CD8-positive, alpha-beta T cell (primary cell): ENCODE measurements at regions of chr14 and their contacts with region 1.

Region 1: DNA sequence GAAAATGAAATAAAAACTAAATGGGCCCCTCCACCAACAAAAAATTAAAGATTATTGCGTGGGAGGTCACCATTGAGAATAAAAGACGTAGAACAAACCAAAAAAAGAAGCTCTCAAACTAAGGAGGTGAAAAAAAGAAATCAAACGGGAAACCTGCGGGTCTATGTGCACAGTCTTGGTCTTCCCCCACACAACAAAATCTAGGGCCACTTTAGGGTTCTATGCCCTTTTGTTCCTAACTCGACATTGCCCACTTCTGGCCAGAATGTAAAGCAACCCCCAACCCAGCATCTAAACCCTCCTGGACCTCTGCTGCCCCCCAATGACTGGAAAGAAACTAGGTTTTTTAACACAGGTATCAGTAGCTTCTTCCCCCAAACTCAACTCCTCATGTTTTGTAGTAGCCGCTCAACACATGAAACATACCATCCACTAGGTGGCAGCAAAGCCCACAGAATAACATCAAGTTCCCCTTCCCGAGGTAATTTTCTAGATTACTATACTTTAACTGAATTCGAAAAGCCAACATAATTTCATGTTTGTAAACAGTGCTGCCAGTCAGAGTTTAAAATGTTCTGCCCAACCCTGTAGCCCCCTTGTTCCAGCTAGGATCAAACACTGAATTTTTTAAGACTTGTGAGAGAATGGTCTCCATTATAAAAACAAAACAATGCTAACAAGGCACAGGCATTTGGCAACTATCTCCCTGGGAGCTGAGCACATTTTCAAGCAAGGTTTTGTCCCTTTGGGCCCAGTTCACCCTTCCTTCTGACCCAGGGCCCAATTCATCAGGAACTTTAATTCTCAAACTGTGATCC is 18.7 kb downstream of the DAD1 start:
- DNase-seq: peak; percentile 69 to 99 (median 85)
- ATAC-seq: peak; percentile 87
- H3K4me3 ChIP-seq: peak overlapping the region; percentile 34 to 38
- H3K4me3 Mint-ChIP-seq: peak overlapping the region; percentile 73
- H3K27ac ChIP-seq: peak overlapping the region; percentile 58 to 97
- H3K27ac Mint-ChIP-seq: peak overlapping the region; percentile 97
- H3K4me1 ChIP-seq: peaks cover 51% of the 10 kb centered on the region
- H3K4me1 Mint-ChIP-seq: peaks cover 54% of the 10 kb centered on the region
- H3K27me3 ChIP-seq: no peaks in the 10 kb centered on the region
- H3K27me3 Mint-ChIP-seq: no peaks in the 10 kb centered on the region
- CTCF ChIP-seq: peak; percentile 99

Region 2: GRCh38 chr14:21868442-21869046 is 701.8 kb before region 1 on chr14:
- CTCF ChIA-PET with region 1: no interaction called
- POLR2A ChIA-PET with region 1: no interaction called
- intact Hi-C with region 1: loop called in 1 of 2 experiments (anchors 1 kb)
- DNase-seq: peak; percentile 53 to 84 (median 74)
- ATAC-seq: peak; percentile 91
- H3K4me3 ChIP-seq: peak overlapping the region in 1 of 2 experiments; percentile 2
- H3K4me3 Mint-ChIP-seq: peak overlapping the region; percentile 65
- H3K27ac ChIP-seq: no peak overlapping the region
- H3K27ac Mint-ChIP-seq: peak overlapping the region; percentile 80
- H3K4me1 ChIP-seq: peaks cover 5% of the 10 kb centered on the region
- H3K4me1 Mint-ChIP-seq: peaks cover 29% of the 10 kb centered on the region
- H3K27me3 ChIP-seq: no peaks in the 10 kb centered on the region
- H3K27me3 Mint-ChIP-seq: no peaks in the 10 kb centered on the region
- CTCF ChIP-seq: peak; percentile 81

Region 3: DNA sequence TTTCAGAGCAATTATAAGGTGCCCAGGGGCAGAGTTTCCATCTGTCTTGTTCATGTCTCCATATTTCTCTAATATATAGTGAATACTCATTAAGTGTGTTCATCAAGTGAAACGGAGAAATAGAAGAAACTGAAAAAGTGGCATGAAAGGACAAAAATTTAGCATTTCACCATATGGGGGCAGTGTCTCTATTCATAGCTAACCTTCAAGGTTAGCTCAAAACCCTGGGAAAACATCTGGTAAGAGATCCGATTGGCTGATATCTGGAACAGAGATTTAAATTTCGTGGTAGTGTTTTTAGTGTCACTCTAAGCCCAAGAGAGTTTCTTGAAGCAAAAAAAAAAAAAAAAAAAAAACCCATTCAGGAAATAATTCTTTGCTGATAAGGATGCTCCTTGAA is 348.8 kb before region 1 on chr14:
- CTCF ChIA-PET with region 1: interaction called, 4 read pairs
- POLR2A ChIA-PET with region 1: interaction called, 3 read pairs
- intact Hi-C with region 1: loop called in 1 of 2 experiments (anchors 5 kb)
- DNase-seq: peak in 2 of 9 experiments; percentile 21 to 51
- ATAC-seq: no peak
- H3K4me3 ChIP-seq: peak overlapping the region in 1 of 2 experiments; percentile 8
- H3K4me3 Mint-ChIP-seq: peak overlapping the region; percentile 50
- H3K27ac ChIP-seq: no peak overlapping the region
- H3K27ac Mint-ChIP-seq: no peak overlapping the region
- H3K4me1 ChIP-seq: peaks cover 4% of the 10 kb centered on the region
- H3K4me1 Mint-ChIP-seq: peaks cover 12% of the 10 kb centered on the region
- H3K27me3 ChIP-seq: no peaks in the 10 kb centered on the region
- H3K27me3 Mint-ChIP-seq: no peaks in the 10 kb centered on the region
- CTCF ChIP-seq: no peak

Region 4: DNA sequence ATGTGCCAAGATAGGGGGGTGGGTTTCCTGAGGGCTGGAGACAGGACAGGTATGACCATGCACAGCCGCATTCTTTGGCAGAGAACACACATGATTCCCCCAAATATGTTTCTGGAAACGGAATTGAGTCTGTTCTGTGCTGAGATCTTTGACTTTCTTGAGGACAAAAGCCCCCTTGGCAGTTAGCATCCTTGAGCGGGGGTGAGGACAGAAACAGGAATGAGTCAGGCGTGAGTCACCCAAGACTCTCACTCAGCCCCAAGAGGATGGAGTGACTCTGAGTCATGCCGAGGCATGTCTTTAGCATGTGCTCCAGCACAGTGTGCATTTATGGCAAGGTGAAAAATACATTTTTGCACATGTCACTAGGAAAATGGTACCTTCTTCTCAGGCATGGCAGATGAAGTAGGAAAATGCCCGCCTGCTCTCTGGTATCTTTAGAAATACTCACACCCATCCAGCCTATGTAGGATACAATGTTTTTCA is 33.4 kb before region 1 on chr14:
- CTCF ChIA-PET with region 1: interaction called, 53 read pairs
- POLR2A ChIA-PET with region 1: interaction called, 10 read pairs
- intact Hi-C with region 1: no loop called
- DNase-seq: peak in 8 of 9 experiments; percentile 65 to 93 (median 82)
- ATAC-seq: peak; percentile 86
- H3K4me3 ChIP-seq: peak overlapping the region; percentile 38
- H3K4me3 Mint-ChIP-seq: peak overlapping the region; percentile 76
- H3K27ac ChIP-seq: peak overlapping the region; percentile 50 to 83
- H3K27ac Mint-ChIP-seq: peak overlapping the region; percentile 93
- H3K4me1 ChIP-seq: peaks cover 98% of the 10 kb centered on the region
- H3K4me1 Mint-ChIP-seq: peaks cover 96% of the 10 kb centered on the region
- H3K27me3 ChIP-seq: no peaks in the 10 kb centered on the region
- H3K27me3 Mint-ChIP-seq: no peaks in the 10 kb centered on the region
- CTCF ChIP-seq: no peak

Region 5: GRCh38 chr14:22653012-22653621 is 82.8 kb after region 1 on chr14:
- CTCF ChIA-PET with region 1: interaction called, 89 read pairs
- POLR2A ChIA-PET with region 1: interaction called, 12 read pairs
- intact Hi-C with region 1: loop called (anchors 1 kb)
- DNase-seq: peak; percentile 8 to 70 (median 50)
- ATAC-seq: peak; percentile 94
- H3K4me3 ChIP-seq: no peak overlapping the region
- H3K4me3 Mint-ChIP-seq: no peak overlapping the region
- H3K27ac ChIP-seq: no peak overlapping the region
- H3K27ac Mint-ChIP-seq: no peak overlapping the region
- H3K4me1 ChIP-seq: no peaks in the 10 kb centered on the region
- H3K4me1 Mint-ChIP-seq: no peaks in the 10 kb centered on the region
- H3K27me3 ChIP-seq: no peaks in the 10 kb centered on the region
- H3K27me3 Mint-ChIP-seq: no peaks in the 10 kb centered on the region
- CTCF ChIP-seq: peak; percentile 72

Region 6: DNA sequence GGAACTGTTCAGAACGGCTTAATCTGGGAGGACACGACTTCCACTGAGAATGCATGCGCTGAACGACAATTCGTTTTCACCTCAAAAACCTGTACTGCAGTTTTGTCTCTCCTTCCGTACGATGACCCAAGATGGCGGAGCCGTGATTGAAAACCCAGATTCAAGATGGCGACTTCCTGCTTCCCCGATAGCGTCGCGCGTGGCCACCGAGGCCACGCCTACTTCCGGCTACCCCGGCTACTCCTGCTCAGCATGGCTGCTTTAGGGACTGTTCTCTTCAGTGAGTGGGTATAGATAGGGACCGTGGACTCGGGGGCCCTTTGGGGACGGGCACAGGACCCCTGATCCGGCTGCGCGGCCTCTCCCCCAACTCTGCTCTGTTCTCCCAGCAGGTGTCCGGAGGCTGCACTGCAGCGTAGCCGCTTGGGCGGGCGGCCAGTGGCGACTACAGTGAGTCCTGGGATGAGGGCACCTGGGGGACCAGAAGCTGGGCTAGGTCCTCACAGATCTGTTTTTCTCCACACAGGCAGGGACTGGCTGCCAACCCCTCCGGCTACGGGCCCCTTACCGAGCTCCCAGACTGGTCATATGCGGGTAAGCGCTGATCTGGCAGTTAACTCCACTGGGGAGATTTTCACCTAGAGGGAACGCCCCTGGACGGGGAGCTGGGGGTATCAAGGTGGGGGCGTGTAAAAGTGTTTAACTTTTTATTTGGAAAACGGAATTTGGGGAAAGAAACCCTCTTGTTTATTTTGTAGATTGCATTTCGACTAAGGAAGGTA is 259.5 kb after region 1 on chr14 and contains the start of gene MRPL52:
- CTCF ChIA-PET with region 1: interaction called, 42 read pairs
- POLR2A ChIA-PET with region 1: interaction called, 5 read pairs
- intact Hi-C with region 1: no loop called
- DNase-seq: peak; percentile 81 to 97 (median 90)
- ATAC-seq: peak; percentile 95
- H3K4me3 ChIP-seq: peak within 1 kb of the TSS; percentile 89 to 91
- H3K4me3 Mint-ChIP-seq: peak within 1 kb of the TSS; percentile 92
- H3K27ac ChIP-seq: peak within 1 kb of the TSS; percentile 69 to 90
- H3K27ac Mint-ChIP-seq: peak within 1 kb of the TSS; percentile 96
- H3K4me1 ChIP-seq: peaks cover 13% of the 10 kb centered on the region
- H3K4me1 Mint-ChIP-seq: peaks cover 31% of the 10 kb centered on the region
- H3K27me3 ChIP-seq: peaks cover 0 to 5% of the 10 kb centered on the region in 2 experiments
- H3K27me3 Mint-ChIP-seq: peaks cover 7% of the 10 kb centered on the region
- CTCF ChIP-seq: no peak
- total RNA-seq, gene MRPL52: 22.3 to 25.7 TPM

Region 7: GRCh38 chr14:22986508-22987054 is 416.2 kb after region 1 on chr14:
- CTCF ChIA-PET with region 1: interaction called, 25 read pairs
- POLR2A ChIA-PET with region 1: interaction called, 12 read pairs
- intact Hi-C with region 1: loop called (anchors 1 kb)
- DNase-seq: peak; percentile 77 to 93 (median 89)
- ATAC-seq: peak; percentile 69
- H3K4me3 ChIP-seq: no peak overlapping the region
- H3K4me3 Mint-ChIP-seq: no peak overlapping the region
- H3K27ac ChIP-seq: no peak overlapping the region
- H3K27ac Mint-ChIP-seq: no peak overlapping the region
- H3K4me1 ChIP-seq: peaks cover 7% of the 10 kb centered on the region
- H3K4me1 Mint-ChIP-seq: no peaks in the 10 kb centered on the region
- H3K27me3 ChIP-seq: peaks cover 0 to 6% of the 10 kb centered on the region in 2 experiments
- H3K27me3 Mint-ChIP-seq: no peaks in the 10 kb centered on the region
- CTCF ChIP-seq: peak; percentile 96